Activated CD4-positive, alpha-beta memory T cell treated with anti-CD3 and anti-CD28 coated beads, Interleukin-2, amount 10 ng/mL, durations not matched to agents 7 days and 5 days (primary cell): ENCODE measurements at regions of chr3 and their contacts with region 1.

Region 1: GRCh38 chr3:158790901-158791589 is 10.8 kb upstream of the MFSD1 start:
- DNase-seq: peak; percentile 25
- H3K4me3 Mint-ChIP-seq: peak overlapping the region; percentile 34
- H3K27ac Mint-ChIP-seq: no peak overlapping the region
- H3K4me1 Mint-ChIP-seq: peaks cover 6% of the 10 kb centered on the region
- H3K27me3 Mint-ChIP-seq: no peaks in the 10 kb centered on the region

Region 2: DNA sequence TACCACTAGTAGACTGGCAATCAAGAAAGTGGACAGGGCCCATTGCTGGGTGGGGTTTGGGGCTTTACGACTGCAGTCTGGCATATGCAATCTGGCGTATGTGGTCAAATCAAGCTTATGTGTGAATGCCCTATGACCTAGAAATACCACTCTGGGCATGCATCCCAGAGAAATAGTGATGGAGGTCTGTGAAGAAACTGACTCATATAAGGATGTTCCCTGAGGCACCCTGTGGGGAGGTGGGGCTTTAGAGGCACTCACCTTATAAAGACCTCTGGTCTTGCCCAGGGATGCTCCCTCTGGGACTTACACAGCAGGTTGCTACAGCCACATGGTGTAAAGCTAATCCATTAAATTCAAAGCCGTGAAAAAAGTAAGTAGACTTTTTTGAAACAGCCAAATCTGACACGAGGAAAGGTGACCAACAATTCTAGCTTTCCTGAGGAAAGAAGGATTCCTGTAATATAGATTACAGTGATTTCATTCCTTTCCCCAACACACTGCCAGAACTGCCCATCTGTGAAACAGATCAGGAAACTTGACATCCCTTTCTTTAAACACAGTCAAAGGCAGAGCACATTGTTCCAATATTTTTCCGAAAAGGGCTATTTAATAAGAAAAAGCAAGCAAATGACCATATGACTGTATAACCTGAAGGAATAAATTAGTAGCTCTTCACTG is 72.4 kb before region 1 on chr3:
- CTCF ChIA-PET with region 1: interaction called, 18 read pairs
- POLR2A ChIA-PET with region 1: no interaction called
- DNase-seq: no peak
- H3K4me3 Mint-ChIP-seq: no peak overlapping the region
- H3K27ac Mint-ChIP-seq: no peak overlapping the region
- H3K4me1 Mint-ChIP-seq: peaks cover 23% of the 10 kb centered on the region
- H3K27me3 Mint-ChIP-seq: no peaks in the 10 kb centered on the region

Region 3: GRCh38 chr3:158727206-158728060 is 63.6 kb before region 1 on chr3:
- CTCF ChIA-PET with region 1: interaction called, 133 read pairs
- POLR2A ChIA-PET with region 1: no interaction called
- DNase-seq: peak; percentile 52
- H3K4me3 Mint-ChIP-seq: peak overlapping the region; percentile 28
- H3K27ac Mint-ChIP-seq: no peak overlapping the region
- H3K4me1 Mint-ChIP-seq: peaks cover 30% of the 10 kb centered on the region
- H3K27me3 Mint-ChIP-seq: no peaks in the 10 kb centered on the region

Region 4: DNA sequence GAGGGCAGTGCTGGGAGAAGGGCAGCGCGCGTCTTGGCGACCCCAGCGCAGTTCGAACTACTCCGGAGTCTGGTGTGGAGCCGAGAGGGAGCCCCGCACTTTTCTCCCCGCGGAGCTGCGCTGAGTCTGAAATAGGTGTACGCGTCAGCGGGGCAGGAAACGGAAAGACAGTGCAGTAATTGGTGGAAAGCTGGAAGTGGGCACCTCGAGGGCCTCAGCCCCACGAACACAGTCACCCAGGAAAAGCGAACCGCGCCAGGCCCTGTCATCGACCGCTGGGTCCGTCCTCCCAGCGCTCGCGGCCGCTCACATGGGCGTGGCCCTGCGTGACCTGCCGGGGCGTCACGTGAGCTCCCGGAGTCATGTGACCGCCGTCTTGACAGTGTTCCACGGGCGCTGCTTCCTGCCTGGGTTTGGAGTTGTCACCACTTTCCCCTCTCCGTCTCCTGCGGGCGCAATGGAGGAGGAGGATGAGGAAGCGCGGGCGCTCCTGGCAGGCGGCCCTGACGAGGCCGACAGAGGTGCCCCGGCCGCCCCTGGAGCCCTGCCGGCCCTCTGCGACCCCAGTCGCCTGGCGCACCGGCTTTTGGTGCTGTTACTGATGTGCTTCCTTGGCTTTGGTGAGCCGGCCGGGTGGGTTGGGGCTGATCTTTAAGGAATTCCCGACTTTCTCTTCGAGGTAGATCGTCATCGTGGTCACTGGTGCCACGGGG is 10.8 kb after region 1 on chr3 and contains the start of gene MFSD1:
- CTCF ChIA-PET with region 1: interaction called, 13 read pairs
- POLR2A ChIA-PET with region 1: interaction called, 9 read pairs
- DNase-seq: peak; percentile 94
- H3K4me3 Mint-ChIP-seq: peak within 1 kb of the TSS; percentile 84
- H3K27ac Mint-ChIP-seq: peak within 1 kb of the TSS; percentile 80
- H3K4me1 Mint-ChIP-seq: peaks cover 25% of the 10 kb centered on the region
- H3K27me3 Mint-ChIP-seq: peaks cover 4% of the 10 kb centered on the region
- total RNA-seq, gene MFSD1: 26.9 to 27.4 TPM